A549 (cell line): ENCODE measurements at regions of chr11 and their contacts with region 1.

Region 1: DNA sequence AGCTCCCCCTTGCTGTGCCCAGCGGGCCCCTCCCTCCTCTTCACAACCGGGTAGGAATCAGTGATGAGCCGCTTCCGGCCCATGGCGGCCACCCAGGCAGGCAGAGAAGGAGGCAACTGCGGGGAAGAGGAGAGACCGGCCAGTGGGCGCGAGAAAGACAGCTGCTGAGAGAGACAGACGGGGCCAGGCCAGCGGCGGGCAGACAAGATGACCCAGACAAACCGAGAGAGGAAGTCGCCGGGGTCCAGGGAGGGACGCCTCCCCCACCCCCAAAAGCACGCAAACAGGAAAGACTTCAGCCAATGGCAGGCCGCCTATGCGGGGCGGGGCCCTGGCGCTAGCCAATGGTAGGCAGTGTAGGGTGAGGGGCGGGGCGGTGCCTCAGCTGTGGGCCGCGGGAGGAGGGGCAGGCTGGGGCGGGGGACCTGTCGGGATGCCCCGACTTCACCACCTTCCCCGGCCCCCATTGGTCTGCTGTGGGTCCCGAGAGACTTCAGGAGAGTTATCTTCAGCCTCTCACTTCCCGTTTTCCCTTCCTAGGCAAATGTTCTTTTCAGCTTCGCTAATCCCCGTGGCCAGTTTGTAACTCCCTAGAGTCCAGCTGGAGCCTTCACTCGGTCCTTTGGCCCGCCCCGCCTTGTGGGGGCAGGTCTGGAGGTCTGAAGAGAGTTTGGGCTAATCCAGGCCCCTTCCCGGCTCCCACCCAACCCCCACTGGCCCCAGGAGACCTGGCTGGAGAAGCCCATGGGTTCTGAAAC is at the start of gene POLD4:
- DNase-seq: peak; percentile 95 to 97
- ATAC-seq: peak; percentile 46 to 74
- H3K4me3 ChIP-seq: peak within 1 kb of the TSS; percentile 69
- H3K27ac ChIP-seq: peak within 1 kb of the TSS; percentile 93 to 98
- H3K4me1 ChIP-seq: peaks cover 87% of the 10 kb centered on the region
- CTCF ChIP-seq: no peak
- EP300 ChIP-seq: no peak
- POLR2A ChIP-seq: peak; percentile 30; the same call in 1 of the 2 replicates
- RAD21 ChIP-seq: no peak
- polyA plus RNA-seq, gene POLD4: 140 and 157 TPM in 2 replicates

Region 2: DNA sequence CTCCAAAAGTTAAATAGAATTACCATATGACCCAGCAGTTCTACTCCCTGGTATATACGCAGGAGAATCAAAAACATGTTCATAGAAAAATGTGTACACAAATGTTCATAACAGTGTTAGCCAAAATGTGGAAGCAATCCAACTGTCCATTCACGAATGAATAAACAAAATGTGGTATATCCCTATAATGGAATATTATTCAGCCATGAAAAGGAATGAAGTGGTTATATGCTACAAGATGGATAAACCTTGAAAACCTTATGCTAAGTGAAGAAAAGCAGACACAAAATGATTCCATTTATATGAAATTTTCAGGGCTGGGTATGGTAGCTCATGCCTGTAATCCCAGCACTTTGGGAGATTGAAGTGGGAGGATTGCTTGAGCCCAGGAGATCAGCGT is 16.2 kb before region 1 on chr11:
- CTCF ChIA-PET with region 1: interaction called, 47 read pairs
- POLR2A ChIA-PET with region 1: interaction called, 8 read pairs
- DNase-seq: no peak
- ATAC-seq: no peak
- H3K4me3 ChIP-seq: no peak overlapping the region
- H3K27ac ChIP-seq: no peak overlapping the region
- H3K4me1 ChIP-seq: no peaks in the 10 kb centered on the region
- CTCF ChIP-seq: no peak
- EP300 ChIP-seq: no peak
- POLR2A ChIP-seq: no peak
- RAD21 ChIP-seq: no peak

Region 3: GRCh38 chr11:67373925-67374618 is 20.6 kb after region 1 on chr11:
- CTCF ChIA-PET with region 1: interaction called, 1,913 read pairs
- POLR2A ChIA-PET with region 1: interaction called, 172 read pairs
- DNase-seq: peak; percentile 96 to 100
- ATAC-seq: peak; percentile 41 to 71
- H3K4me3 ChIP-seq: peak overlapping the region; percentile 68
- H3K27ac ChIP-seq: peak overlapping the region; percentile 95 to 100
- H3K4me1 ChIP-seq: peaks cover 73% of the 10 kb centered on the region
- CTCF ChIP-seq: peak; percentile 29
- EP300 ChIP-seq: peak; percentile 87 to 93; a peak in 4 of 5 replicates
- POLR2A ChIP-seq: peak; percentile 36
- RAD21 ChIP-seq: peak; percentile 41 to 58

Region 4: GRCh38 chr11:67468835-67469811 is 115.6 kb after region 1 on chr11 and contains the start of gene TMEM134:
- CTCF ChIA-PET with region 1: interaction called, 16 read pairs
- POLR2A ChIA-PET with region 1: interaction called, 7 read pairs
- DNase-seq: peak; percentile 81 to 94
- ATAC-seq: peak; percentile 75 to 78
- H3K4me3 ChIP-seq: peak within 1 kb of the TSS; percentile 67
- H3K27ac ChIP-seq: peak within 1 kb of the TSS; percentile 83 to 97
- H3K4me1 ChIP-seq: peaks cover 28% of the 10 kb centered on the region
- CTCF ChIP-seq: peak; percentile 53
- EP300 ChIP-seq: no peak
- POLR2A ChIP-seq: peak; percentile 73
- RAD21 ChIP-seq: peak; percentile 54 to 74
- polyA plus RNA-seq, gene TMEM134: 18.1 and 18.8 TPM in 2 replicates